ENCODE measurements at regions of chr3 and their contacts with region 1.

Region 1: DNA sequence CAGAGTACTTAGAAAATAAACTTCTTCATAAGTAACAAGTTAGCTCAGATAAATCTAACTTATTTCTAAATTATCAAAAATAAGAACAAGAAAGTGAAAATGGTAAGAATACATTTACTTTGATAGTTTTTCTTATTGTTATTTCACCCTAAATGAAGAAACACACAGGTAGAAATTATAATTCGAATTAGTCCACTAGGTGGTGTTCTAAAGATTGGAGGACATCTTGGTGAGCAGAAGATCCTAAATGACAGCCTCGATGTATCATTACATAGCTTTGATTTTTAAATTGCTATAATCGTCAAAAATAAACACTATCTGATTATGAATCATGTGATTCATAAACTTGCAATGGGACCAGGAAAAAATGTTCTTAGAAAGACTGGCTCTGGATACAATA is 280.8 kb upstream of the UBE2E2 start:
- DNase-seq: no peak
- ATAC-seq: no peak
- H3K4me3 Mint-ChIP-seq: no peak overlapping the region
- H3K27ac Mint-ChIP-seq: no peak overlapping the region
- H3K4me1 Mint-ChIP-seq: no peaks in the 10 kb centered on the region
- H3K27me3 Mint-ChIP-seq: no peaks in the 10 kb centered on the region
- CTCF ChIP-seq: no peak

Region 2: DNA sequence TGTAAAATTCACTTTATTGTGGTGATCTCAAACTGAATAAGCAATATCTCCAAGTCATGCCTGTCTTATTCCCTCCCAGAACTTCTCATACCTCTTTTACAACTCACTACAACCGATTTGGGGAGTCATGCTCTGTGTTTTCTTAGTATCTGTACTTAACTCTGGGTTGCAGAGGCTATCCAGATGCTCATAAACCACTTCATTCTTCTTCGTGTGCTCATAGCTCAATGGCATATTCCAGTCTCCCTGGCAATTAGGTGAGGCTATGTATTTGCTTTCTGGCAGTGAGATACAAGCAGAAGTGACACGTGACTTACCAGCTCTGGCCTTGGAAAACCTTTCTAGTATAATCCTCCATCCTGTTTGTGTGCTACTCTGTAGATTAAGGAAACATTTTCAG is 1532.2 kb before region 1 on chr3:
- CTCF ChIA-PET with region 1: no interaction called
- POLR2A ChIA-PET with region 1: no interaction called
- intact Hi-C with region 1: no loop called
- DNase-seq: no peak
- ATAC-seq: no peak
- H3K4me3 Mint-ChIP-seq: no peak overlapping the region
- H3K27ac Mint-ChIP-seq: no peak overlapping the region
- H3K4me1 Mint-ChIP-seq: no peaks in the 10 kb centered on the region
- H3K27me3 Mint-ChIP-seq: no peaks in the 10 kb centered on the region
- CTCF ChIP-seq: no peak

Region 3: GRCh38 chr3:22960105-22960984 is 38.0 kb after region 1 on chr3:
- CTCF ChIA-PET with region 1: interaction called, 5 read pairs
- POLR2A ChIA-PET with region 1: no interaction called
- intact Hi-C with region 1: loop called (anchors 2 kb)
- DNase-seq: no peak
- ATAC-seq: no peak
- H3K4me3 Mint-ChIP-seq: no peak overlapping the region
- H3K27ac Mint-ChIP-seq: no peak overlapping the region
- H3K4me1 Mint-ChIP-seq: peaks cover 4% of the 10 kb centered on the region
- H3K27me3 Mint-ChIP-seq: no peaks in the 10 kb centered on the region
- CTCF ChIP-seq: no peak

Region 4: DNA sequence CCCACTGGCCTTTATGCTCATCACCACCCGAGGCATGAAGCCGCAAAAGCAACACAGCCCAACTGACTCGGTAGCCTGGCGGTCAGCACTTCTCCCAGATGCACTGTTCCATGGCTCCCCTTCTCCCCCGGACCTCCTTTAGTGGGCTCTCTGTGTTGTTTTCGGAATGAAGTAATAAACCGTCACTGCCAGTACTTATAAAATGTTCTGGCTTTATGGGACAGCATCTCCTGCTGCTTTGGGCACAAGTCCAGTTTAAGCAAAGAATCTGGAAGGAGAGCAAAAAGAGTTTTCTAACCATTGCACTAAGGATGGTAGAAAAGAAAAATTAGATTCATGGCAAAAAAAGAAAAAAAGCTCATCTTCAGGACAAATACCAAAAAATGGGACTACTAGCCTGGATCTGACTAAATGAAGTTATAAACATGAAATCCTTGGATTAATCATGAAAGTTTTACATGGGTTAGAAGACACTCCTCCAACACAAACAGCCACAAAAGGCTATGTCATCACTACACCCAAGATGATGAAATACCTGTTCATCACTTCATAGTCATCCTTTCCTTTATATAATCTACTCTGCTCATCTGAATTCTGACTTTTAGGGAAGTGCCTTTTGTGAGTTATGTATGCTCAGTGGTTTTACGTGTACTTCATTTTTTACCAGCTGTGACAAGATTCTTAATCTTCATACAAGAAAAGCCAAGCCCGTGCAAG is 191.3 kb after region 1 on chr3:
- CTCF ChIA-PET with region 1: no interaction called
- POLR2A ChIA-PET with region 1: no interaction called
- intact Hi-C with region 1: no loop called
- DNase-seq: no peak
- ATAC-seq: peak; percentile 37
- H3K4me3 Mint-ChIP-seq: peak overlapping the region; percentile 8
- H3K27ac Mint-ChIP-seq: peak overlapping the region; percentile 16
- H3K4me1 Mint-ChIP-seq: peaks cover 24% of the 10 kb centered on the region
- H3K27me3 Mint-ChIP-seq: peaks cover 4% of the 10 kb centered on the region
- CTCF ChIP-seq: no peak

Region 5: DNA sequence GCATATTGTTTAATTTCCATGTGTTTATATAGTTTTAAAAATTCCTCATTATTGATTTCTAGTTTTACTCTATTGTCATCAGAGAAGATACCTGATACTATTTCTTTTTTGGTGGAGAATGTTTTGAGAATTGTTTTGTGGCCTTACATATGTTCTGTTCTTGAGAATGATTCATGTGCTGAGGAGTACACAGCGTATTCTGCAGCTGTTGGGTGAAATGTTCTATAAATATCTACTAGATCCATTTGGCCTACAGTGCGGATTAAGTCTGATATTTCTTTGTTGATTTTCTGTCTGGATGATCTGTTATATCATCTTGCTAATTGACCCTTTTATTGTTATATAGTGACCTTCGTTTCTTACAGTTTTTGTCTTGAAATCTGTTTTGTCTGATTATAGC is 390.5 kb after region 1 on chr3:
- CTCF ChIA-PET with region 1: no interaction called
- POLR2A ChIA-PET with region 1: no interaction called
- intact Hi-C with region 1: no loop called
- DNase-seq: no peak
- ATAC-seq: no peak
- H3K4me3 Mint-ChIP-seq: no peak overlapping the region
- H3K27ac Mint-ChIP-seq: no peak overlapping the region
- H3K4me1 Mint-ChIP-seq: peaks cover 21% of the 10 kb centered on the region
- H3K27me3 Mint-ChIP-seq: no peaks in the 10 kb centered on the region
- CTCF ChIP-seq: no peak

Region 6: GRCh38 chr3:23865595-23866450 is 943.5 kb after region 1 on chr3:
- CTCF ChIA-PET with region 1: no interaction called
- POLR2A ChIA-PET with region 1: no interaction called
- intact Hi-C with region 1: loop called (anchors 5 kb)
- DNase-seq: no peak
- ATAC-seq: peak; percentile 57
- H3K4me3 Mint-ChIP-seq: no peak overlapping the region
- H3K27ac Mint-ChIP-seq: no peak overlapping the region
- H3K4me1 Mint-ChIP-seq: peaks cover 45% of the 10 kb centered on the region
- H3K27me3 Mint-ChIP-seq: no peaks in the 10 kb centered on the region
- CTCF ChIP-seq: no peak